Activated CD4-positive, alpha-beta memory T cell treated with anti-CD3 and anti-CD28 coated beads, Interleukin-2, amount 10 ng/mL, durations not matched to agents 7 days and 5 days (primary cell): ENCODE measurements at regions of chr1 and their contacts with region 1.

Region 1: GRCh38 chr1:28088168-28088961 is at the start of gene EYA3:
- DNase-seq: peak; percentile 100
- H3K4me3 Mint-ChIP-seq: peak within 1 kb of the TSS; percentile 99
- H3K27ac Mint-ChIP-seq: peak within 1 kb of the TSS; percentile 97
- H3K4me1 Mint-ChIP-seq: peaks cover 38% of the 10 kb centered on the region
- H3K27me3 Mint-ChIP-seq: peaks cover 6% of the 10 kb centered on the region
- total RNA-seq, gene EYA3: 29.5 to 32.0 TPM

Region 2: DNA sequence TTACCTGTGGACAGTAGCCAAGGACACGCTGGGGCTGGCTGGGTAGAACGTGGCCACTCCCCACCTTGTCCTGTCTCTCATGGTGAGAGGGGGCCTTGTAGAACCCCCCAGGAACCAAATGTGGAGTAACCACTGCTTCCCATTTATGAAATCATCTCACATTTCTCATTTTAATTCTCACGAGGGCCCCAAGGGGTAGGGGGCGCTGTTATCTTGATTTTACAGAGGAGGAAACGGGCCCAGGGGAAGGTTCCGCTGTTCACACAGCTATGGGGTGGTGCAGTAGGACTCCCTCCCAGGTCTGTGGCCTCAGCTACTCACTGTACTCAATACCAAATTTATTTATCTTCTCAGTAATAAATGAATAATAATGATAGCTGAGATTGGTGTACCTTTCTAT is 148.1 kb before region 1 on chr1:
- CTCF ChIA-PET with region 1: interaction called, 12 read pairs
- POLR2A ChIA-PET with region 1: no interaction called
- DNase-seq: peak; percentile 79
- H3K4me3 Mint-ChIP-seq: no peak overlapping the region
- H3K27ac Mint-ChIP-seq: peak overlapping the region; percentile 28
- H3K4me1 Mint-ChIP-seq: peaks cover 56% of the 10 kb centered on the region
- H3K27me3 Mint-ChIP-seq: peaks cover 7% of the 10 kb centered on the region

Region 3: GRCh38 chr1:27992276-27992675 is 96.1 kb before region 1 on chr1:
- CTCF ChIA-PET with region 1: interaction called, 11 read pairs
- POLR2A ChIA-PET with region 1: interaction called, 14 read pairs
- DNase-seq: peak; percentile 66
- H3K4me3 Mint-ChIP-seq: no peak overlapping the region
- H3K27ac Mint-ChIP-seq: peak overlapping the region; percentile 84
- H3K4me1 Mint-ChIP-seq: peaks cover 39% of the 10 kb centered on the region
- H3K27me3 Mint-ChIP-seq: no peaks in the 10 kb centered on the region

Region 4: DNA sequence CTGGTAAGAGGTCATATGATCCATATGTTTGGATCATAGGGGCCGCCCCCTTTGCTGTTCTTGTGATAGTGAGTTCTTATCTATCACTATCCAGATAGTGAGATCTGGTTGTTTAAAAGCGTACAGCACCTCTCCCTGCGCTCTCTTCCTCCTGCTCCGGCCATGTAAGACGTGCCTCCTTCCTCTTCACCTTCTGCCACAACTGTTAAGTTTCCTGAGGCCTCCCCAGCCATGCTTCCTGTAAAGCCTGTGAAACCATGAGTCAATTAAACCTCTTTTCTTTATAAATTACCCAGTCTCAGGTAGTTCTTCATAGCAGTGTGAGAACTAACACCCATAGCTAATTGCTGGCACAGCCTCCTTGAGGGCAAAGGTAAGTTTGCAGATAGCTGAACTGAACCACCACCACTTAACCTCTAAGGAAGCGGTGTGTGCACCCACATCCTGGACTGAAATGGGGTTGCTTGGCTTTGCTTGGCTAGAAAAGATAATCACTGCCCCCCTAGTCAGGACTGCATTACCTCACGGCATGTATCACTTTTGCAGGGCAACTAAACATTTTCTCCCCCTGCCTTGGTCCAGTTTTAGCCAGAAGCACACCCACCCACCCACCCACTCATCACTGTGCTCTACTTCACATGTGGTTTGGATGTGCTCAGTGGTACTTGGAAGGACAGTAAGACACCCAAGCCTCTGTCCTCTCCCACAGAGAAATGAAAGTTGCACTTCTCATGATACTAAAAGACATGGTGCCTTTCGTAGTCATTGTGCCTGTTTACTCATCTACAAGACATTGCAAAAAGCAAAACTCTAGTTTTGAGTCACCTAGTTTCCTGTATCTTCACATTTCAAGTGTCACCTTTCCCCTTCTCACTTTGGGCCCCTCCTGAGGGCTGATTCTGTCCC is 111.2 kb after region 1 on chr1:
- CTCF ChIA-PET with region 1: interaction called, 21 read pairs
- POLR2A ChIA-PET with region 1: interaction called, 15 read pairs
- DNase-seq: peak; percentile 92
- H3K4me3 Mint-ChIP-seq: peak overlapping the region; percentile 39
- H3K27ac Mint-ChIP-seq: peak overlapping the region; percentile 94
- H3K4me1 Mint-ChIP-seq: peaks cover 54% of the 10 kb centered on the region
- H3K27me3 Mint-ChIP-seq: no peaks in the 10 kb centered on the region

Region 5: DNA sequence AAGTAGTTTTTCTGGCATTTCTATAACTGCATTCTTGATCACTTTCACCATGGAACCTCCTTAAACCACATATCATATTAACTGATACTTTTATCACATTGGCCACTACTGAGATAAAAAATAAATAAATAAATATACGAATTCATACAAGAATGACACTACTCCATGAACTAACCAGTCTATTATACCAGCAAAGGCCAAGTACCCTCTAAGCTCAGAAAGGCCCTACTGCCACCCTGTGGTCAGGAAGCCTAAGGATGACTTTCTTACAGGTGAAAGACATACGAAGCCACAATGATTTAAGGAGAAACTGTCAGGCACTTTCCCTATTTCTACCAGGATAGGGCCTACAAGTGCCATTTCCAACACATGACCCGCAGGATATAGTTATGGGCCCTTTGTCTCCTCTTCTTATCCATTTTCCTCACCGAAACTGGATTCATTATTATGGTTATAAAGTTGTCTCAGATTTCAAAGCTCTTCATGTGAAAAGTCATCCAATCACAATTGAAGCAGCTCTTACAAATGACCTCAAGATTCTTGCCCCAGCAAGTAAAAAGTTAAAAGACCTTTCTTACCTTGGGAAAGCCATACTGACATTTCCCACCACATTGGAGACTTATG is 120.6 kb after region 1 on chr1:
- CTCF ChIA-PET with region 1: interaction called, 130 read pairs
- POLR2A ChIA-PET with region 1: interaction called, 11 read pairs
- DNase-seq: peak; percentile 78
- H3K4me3 Mint-ChIP-seq: no peak overlapping the region
- H3K27ac Mint-ChIP-seq: no peak overlapping the region
- H3K4me1 Mint-ChIP-seq: peaks cover 4% of the 10 kb centered on the region
- H3K27me3 Mint-ChIP-seq: no peaks in the 10 kb centered on the region

Region 6: GRCh38 chr1:28235755-28236655 is 147.6 kb after region 1 on chr1 and contains the start of gene ATP5IF1:
- CTCF ChIA-PET with region 1: interaction called, 9 read pairs
- POLR2A ChIA-PET with region 1: interaction called, 18 read pairs
- DNase-seq: peak; percentile 96
- H3K4me3 Mint-ChIP-seq: no peak within 1 kb of the TSS
- H3K27ac Mint-ChIP-seq: no peak within 1 kb of the TSS
- H3K4me1 Mint-ChIP-seq: peaks cover 25% of the 10 kb centered on the region
- H3K27me3 Mint-ChIP-seq: no peaks in the 10 kb centered on the region
- total RNA-seq, gene ATP5IF1: 178 TPM

Region 7: GRCh38 chr1:28259307-28260167 is 171.2 kb after region 1 on chr1 and contains the start of gene SESN2:
- CTCF ChIA-PET with region 1: interaction called, 11 read pairs
- POLR2A ChIA-PET with region 1: interaction called, 5 read pairs
- DNase-seq: peak; percentile 100
- H3K4me3 Mint-ChIP-seq: peak within 1 kb of the TSS; percentile 71
- H3K27ac Mint-ChIP-seq: peak within 1 kb of the TSS; percentile 83
- H3K4me1 Mint-ChIP-seq: peaks cover 53% of the 10 kb centered on the region
- H3K27me3 Mint-ChIP-seq: no peaks in the 10 kb centered on the region
- total RNA-seq, gene SESN2: 22.8 to 23.9 TPM